CD8-positive, alpha-beta T cell (primary cell): ENCODE measurements at regions of chr11 and their contacts with region 1.

Region 1: DNA sequence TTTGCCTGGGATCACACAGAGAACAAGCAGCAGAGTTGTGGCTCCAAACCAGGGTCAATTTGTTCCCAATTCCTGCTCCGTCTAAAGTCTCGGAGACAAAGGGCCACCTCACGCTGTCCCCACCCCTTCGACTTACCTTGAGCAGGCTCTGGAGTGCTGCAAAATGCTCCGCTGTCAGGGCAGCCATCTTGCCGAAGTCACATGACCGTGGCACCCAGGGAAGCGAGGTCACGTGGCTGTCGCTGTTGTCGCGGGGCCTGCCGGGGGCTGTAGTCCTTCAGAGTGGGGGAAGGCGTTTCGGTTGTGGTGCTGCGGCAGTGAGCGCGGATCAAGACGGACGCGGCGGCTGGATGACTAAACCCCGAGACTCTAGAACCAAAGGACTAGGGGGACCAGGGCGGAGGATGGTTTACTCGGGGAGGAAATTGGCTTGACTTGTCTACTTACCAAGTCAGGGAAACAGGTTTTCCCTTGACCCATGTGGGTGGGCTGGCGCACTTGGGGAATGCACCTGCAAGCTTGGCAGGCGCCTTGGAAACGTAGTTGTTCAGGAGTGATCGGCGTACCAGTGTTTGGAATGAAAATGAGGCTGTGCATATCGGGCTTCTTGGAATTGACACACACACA is at the start of gene COMMD9:
- DNase-seq: peak; percentile 86 to 96 (median 94)
- ATAC-seq: peak; percentile 96
- H3K4me3 ChIP-seq: peak within 1 kb of the TSS; percentile 65 to 90
- H3K4me3 Mint-ChIP-seq: peak within 1 kb of the TSS; percentile 89
- H3K27ac ChIP-seq: peak within 1 kb of the TSS; percentile 35 to 40
- H3K27ac Mint-ChIP-seq: peak within 1 kb of the TSS; percentile 87
- H3K4me1 ChIP-seq: peaks cover 22% of the 10 kb centered on the region
- H3K4me1 Mint-ChIP-seq: peaks cover 43% of the 10 kb centered on the region
- H3K27me3 ChIP-seq: no peaks in the 10 kb centered on the region
- H3K27me3 Mint-ChIP-seq: no peaks in the 10 kb centered on the region
- CTCF ChIP-seq: no peak
- total RNA-seq, gene COMMD9: 34.1 to 38.1 TPM

Region 2: GRCh38 chr11:34653826-34654490 is 1635.4 kb before region 1 on chr11:
- CTCF ChIA-PET with region 1: no interaction called
- POLR2A ChIA-PET with region 1: no interaction called
- intact Hi-C with region 1: loop called in 1 of 2 experiments (anchors 5 kb)
- DNase-seq: peak in 1 of 9 experiments; percentile 19
- ATAC-seq: no peak
- H3K4me3 ChIP-seq: no peak overlapping the region
- H3K4me3 Mint-ChIP-seq: no peak overlapping the region
- H3K27ac ChIP-seq: no peak overlapping the region
- H3K27ac Mint-ChIP-seq: no peak overlapping the region
- H3K4me1 ChIP-seq: peaks cover 43% of the 10 kb centered on the region
- H3K4me1 Mint-ChIP-seq: peaks cover 38% of the 10 kb centered on the region
- H3K27me3 ChIP-seq: peaks cover 0 to 3% of the 10 kb centered on the region in 2 experiments
- H3K27me3 Mint-ChIP-seq: peaks cover 32% of the 10 kb centered on the region
- CTCF ChIP-seq: no peak

Region 3: DNA sequence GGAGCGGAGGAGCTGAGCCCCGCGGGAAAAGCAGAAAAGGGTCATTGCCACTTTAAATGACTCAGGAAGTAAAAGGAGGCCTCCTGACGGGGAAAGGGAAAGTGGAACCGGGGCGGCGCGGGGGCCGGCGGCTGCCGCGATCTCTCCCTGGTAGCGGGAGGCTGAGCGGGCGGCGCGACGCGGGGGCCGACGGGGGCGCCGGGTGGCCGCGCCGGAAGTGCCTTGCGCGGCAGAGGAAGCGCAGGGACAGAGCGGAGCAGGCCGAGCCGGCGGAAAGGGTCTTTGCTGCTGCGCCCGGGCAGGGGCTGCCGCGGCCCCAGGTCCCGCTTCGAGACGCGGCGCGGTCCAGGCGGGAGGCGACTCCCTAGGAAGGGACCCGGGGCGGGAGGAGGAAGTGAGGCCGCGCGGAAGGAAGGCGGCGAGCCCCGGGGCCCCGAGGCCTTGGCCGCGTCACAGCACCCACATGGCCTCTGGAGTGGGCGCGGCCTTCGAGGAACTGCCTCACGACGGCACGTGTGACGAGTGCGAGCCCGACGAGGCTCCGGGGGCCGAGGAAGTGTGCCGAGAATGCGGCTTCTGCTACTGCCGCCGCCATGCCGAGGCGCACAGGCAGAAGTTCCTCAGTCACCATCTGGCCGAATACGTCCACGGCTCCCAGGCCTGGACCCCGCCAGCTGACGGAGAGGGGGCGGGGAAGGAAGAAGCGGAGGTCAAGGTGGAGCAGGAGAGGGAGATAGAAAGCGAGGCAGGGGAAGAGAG is 626.5 kb before region 1 on chr11 and contains the start of gene TRIM44:
- CTCF ChIA-PET with region 1: no interaction called
- POLR2A ChIA-PET with region 1: no interaction called
- intact Hi-C with region 1: loop called (anchors 1 to 2 kb)
- DNase-seq: peak; percentile 57 to 89 (median 79)
- ATAC-seq: peak; percentile 81
- H3K4me3 ChIP-seq: peak within 1 kb of the TSS; percentile 91 to 97
- H3K4me3 Mint-ChIP-seq: peak within 1 kb of the TSS; percentile 96
- H3K27ac ChIP-seq: peak within 1 kb of the TSS; percentile 84 to 85
- H3K27ac Mint-ChIP-seq: peak within 1 kb of the TSS; percentile 97
- H3K4me1 ChIP-seq: peaks cover 23% of the 10 kb centered on the region
- H3K4me1 Mint-ChIP-seq: peaks cover 47% of the 10 kb centered on the region
- H3K27me3 ChIP-seq: peaks cover 0 to 4% of the 10 kb centered on the region in 2 experiments
- H3K27me3 Mint-ChIP-seq: no peaks in the 10 kb centered on the region
- CTCF ChIP-seq: no peak
- total RNA-seq, gene TRIM44: 25.7 to 29.5 TPM

Region 4: DNA sequence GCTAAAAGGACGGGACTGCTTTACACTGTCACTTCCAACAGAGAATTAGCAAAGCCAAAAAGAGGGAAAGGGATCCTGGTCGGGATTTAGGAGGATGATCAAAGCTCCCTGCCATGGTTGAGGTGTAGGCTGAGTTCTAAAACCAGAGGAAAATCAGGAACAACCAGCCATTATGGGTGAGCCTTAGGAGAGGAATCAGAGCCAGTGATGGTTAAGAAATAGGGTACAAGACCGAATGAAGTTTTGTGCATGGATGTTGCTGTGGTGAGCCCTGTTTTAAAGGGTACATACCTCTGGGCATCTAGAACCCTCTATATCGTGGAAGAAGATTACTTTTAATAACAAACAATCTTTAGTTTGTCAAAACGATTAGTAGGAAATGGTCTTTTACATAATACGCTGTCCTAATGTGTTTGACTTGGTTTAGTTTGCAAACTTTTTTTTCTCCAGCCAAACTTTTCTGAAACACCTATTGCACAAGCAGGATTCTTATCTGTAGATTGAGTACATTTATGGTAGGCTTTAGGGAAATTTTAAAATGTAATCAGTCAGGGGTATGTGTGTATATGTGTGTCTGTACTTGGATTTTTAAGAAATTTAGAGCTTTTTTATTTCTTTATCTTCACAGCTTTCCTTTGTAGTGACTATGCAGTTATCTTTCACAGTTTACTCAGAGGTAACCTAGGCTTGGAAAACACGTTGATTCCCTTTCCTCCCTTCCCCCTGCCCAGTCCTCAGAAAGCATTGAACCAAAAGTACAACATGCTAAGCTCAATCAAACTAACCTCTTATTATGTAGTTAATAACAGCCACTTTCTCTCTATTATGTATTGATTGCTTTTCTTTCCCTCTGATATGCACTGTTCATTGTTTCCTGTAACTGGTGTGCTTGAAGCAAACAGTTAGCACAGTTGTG is 600.0 kb before region 1 on chr11:
- CTCF ChIA-PET with region 1: no interaction called
- POLR2A ChIA-PET with region 1: no interaction called
- intact Hi-C with region 1: no loop called
- DNase-seq: no peak
- ATAC-seq: no peak
- H3K4me3 ChIP-seq: no peak overlapping the region
- H3K4me3 Mint-ChIP-seq: no peak overlapping the region
- H3K27ac ChIP-seq: no peak overlapping the region
- H3K27ac Mint-ChIP-seq: no peak overlapping the region
- H3K4me1 ChIP-seq: no peaks in the 10 kb centered on the region
- H3K4me1 Mint-ChIP-seq: peaks cover 16% of the 10 kb centered on the region
- H3K27me3 ChIP-seq: no peaks in the 10 kb centered on the region
- H3K27me3 Mint-ChIP-seq: no peaks in the 10 kb centered on the region
- CTCF ChIP-seq: no peak

Region 5: GRCh38 chr11:36478700-36479329 is 189.5 kb after region 1 on chr11:
- CTCF ChIA-PET with region 1: interaction called, 28 read pairs
- POLR2A ChIA-PET with region 1: no interaction called
- intact Hi-C with region 1: loop called (anchors 2 to 5 kb)
- DNase-seq: peak in 3 of 9 experiments; percentile 24 to 66 (median 60)
- ATAC-seq: no peak
- H3K4me3 ChIP-seq: no peak overlapping the region
- H3K4me3 Mint-ChIP-seq: no peak overlapping the region
- H3K27ac ChIP-seq: no peak overlapping the region
- H3K27ac Mint-ChIP-seq: no peak overlapping the region
- H3K4me1 ChIP-seq: no peaks in the 10 kb centered on the region
- H3K4me1 Mint-ChIP-seq: peaks cover 6% of the 10 kb centered on the region
- H3K27me3 ChIP-seq: no peaks in the 10 kb centered on the region
- H3K27me3 Mint-ChIP-seq: no peaks in the 10 kb centered on the region
- CTCF ChIP-seq: peak; percentile 39

Region 6: DNA sequence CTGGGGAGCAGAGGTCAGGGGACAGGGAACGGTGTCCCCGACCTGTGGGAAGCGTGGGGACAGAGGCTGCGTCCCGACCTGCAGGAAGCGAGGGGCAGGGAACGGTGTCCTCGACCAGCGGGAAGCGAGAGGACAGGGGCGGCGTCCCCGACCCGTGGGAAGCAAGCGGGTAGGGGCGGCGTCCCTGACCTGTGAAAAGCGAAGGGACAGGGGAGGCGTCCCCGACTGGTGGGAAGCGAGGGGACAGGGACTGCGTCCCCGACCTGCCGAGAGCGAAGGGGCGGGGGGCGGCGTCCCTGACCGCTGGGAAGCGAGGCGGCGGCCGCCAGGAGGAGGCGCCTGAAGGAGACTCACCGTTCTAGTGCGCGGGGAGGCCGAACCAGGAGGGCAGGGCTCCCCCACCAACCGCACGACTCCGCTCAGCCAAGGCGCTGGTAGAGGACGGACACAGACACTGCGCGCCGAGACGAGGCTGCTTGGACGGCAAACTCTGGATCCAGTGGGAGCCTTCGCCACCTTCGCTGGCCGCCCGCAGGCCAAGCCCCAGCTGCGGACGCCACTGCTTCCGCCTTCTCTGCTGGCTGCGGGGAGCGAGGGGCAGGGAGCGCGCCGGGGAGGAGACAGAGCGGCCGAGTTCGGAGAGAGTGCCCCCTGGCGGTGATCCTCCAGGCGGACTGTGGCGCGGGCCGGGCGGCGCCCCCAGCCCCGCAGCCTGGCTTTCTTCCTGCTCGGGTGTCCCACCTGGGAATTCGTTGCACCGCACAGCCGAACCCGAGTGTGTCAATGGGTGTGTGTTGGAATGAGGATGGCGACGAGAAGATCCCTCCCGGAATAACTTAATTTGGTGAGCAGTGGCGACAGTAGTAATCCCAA is 220.6 kb after region 1 on chr11 and contains the start of gene TRAF6:
- CTCF ChIA-PET with region 1: interaction called, 3 read pairs
- POLR2A ChIA-PET with region 1: interaction called, 5 read pairs
- intact Hi-C with region 1: loop called (anchors 1 kb)
- DNase-seq: peak; percentile 74 to 95 (median 91)
- ATAC-seq: peak; percentile 95
- H3K4me3 ChIP-seq: peak within 1 kb of the TSS; percentile 84 to 97
- H3K4me3 Mint-ChIP-seq: peak within 1 kb of the TSS; percentile 92
- H3K27ac ChIP-seq: peak within 1 kb of the TSS; percentile 74 to 83
- H3K27ac Mint-ChIP-seq: peak within 1 kb of the TSS; percentile 92
- H3K4me1 ChIP-seq: peaks cover 16% of the 10 kb centered on the region
- H3K4me1 Mint-ChIP-seq: peaks cover 37% of the 10 kb centered on the region
- H3K27me3 ChIP-seq: no peaks in the 10 kb centered on the region
- H3K27me3 Mint-ChIP-seq: peaks cover 5% of the 10 kb centered on the region
- CTCF ChIP-seq: peak; percentile 84
- total RNA-seq, gene TRAF6: 29.7 to 31.3 TPM

Region 7: GRCh38 chr11:36746886-36747710 is 457.8 kb after region 1 on chr11:
- CTCF ChIA-PET with region 1: interaction called, 4 read pairs
- POLR2A ChIA-PET with region 1: no interaction called
- intact Hi-C with region 1: loop called (anchors 1 to 10 kb)
- DNase-seq: peak; percentile 62 to 91 (median 77)
- ATAC-seq: peak; percentile 100
- H3K4me3 ChIP-seq: no peak overlapping the region
- H3K4me3 Mint-ChIP-seq: no peak overlapping the region
- H3K27ac ChIP-seq: no peak overlapping the region
- H3K27ac Mint-ChIP-seq: no peak overlapping the region
- H3K4me1 ChIP-seq: no peaks in the 10 kb centered on the region
- H3K4me1 Mint-ChIP-seq: peaks cover 5% of the 10 kb centered on the region
- H3K27me3 ChIP-seq: no peaks in the 10 kb centered on the region
- H3K27me3 Mint-ChIP-seq: peaks cover 27% of the 10 kb centered on the region
- CTCF ChIP-seq: peak; percentile 91